Activated CD4-positive, alpha-beta memory T cell treated with anti-CD3 and anti-CD28 coated beads for 36 hours (primary cell): ENCODE measurements at regions of chr14 and their contacts with region 1.

Region 1: GRCh38 chr14:69637503-69638030 is 26.2 kb downstream of the SUSD6 start:
- DNase-seq: peak; percentile 58
- H3K4me3 Mint-ChIP-seq: peak overlapping the region; percentile 54
- H3K27ac Mint-ChIP-seq: peak overlapping the region; percentile 94
- H3K4me1 Mint-ChIP-seq: peaks cover 92% of the 10 kb centered on the region
- H3K27me3 Mint-ChIP-seq: no peaks in the 10 kb centered on the region

Region 2: DNA sequence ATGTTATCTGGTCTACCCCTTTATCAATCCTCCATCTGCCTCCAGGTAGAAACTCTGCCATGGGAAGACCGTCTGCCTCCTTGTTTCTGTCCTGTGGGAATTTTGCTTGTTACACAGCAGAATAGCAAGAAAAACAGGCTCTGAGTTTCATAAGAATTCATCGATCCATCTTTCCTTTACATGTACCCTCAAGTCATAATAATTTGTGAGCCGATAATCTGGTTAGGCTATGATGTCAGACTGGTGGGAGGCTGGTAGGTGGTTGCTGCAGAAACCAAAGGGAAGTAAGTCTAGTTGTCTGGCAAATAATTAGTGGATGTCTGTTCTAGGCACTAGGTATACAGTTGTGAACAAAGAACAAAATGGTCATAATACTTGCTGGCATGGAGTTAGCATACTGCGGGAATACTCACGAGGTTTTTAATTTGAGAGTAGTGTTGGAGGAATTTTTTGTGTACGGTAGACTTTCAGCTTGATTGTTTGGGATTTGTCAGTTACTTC is 17.4 kb before region 1 on chr14:
- CTCF ChIA-PET with region 1: interaction called, 5 read pairs
- POLR2A ChIA-PET with region 1: interaction called, 11 read pairs
- intact Hi-C with region 1: loop called (anchors 1 kb)
- DNase-seq: peak; percentile 49
- H3K4me3 Mint-ChIP-seq: peak overlapping the region; percentile 68
- H3K27ac Mint-ChIP-seq: peak overlapping the region; percentile 98
- H3K4me1 Mint-ChIP-seq: peaks cover 97% of the 10 kb centered on the region
- H3K27me3 Mint-ChIP-seq: no peaks in the 10 kb centered on the region

Region 3: GRCh38 chr14:69625299-69626131 is 12.1 kb before region 1 on chr14:
- CTCF ChIA-PET with region 1: interaction called, 5 read pairs
- POLR2A ChIA-PET with region 1: interaction called, 11 read pairs
- intact Hi-C with region 1: loop called (anchors 1 kb)
- DNase-seq: peak; percentile 92
- H3K4me3 Mint-ChIP-seq: peak overlapping the region; percentile 71
- H3K27ac Mint-ChIP-seq: peak overlapping the region; percentile 96
- H3K4me1 Mint-ChIP-seq: peaks cover 96% of the 10 kb centered on the region
- H3K27me3 Mint-ChIP-seq: no peaks in the 10 kb centered on the region

Region 4: GRCh38 chr14:69658664-69659261 is 21.2 kb after region 1 on chr14:
- CTCF ChIA-PET with region 1: no interaction called
- POLR2A ChIA-PET with region 1: interaction called, 3 read pairs
- intact Hi-C with region 1: loop called (anchors 1 kb)
- DNase-seq: peak; percentile 61
- H3K4me3 Mint-ChIP-seq: no peak overlapping the region
- H3K27ac Mint-ChIP-seq: peak overlapping the region; percentile 83
- H3K4me1 Mint-ChIP-seq: peaks cover 93% of the 10 kb centered on the region
- H3K27me3 Mint-ChIP-seq: no peaks in the 10 kb centered on the region

Region 5: GRCh38 chr14:69685716-69686115 is 48.1 kb after region 1 on chr14:
- CTCF ChIA-PET with region 1: interaction called, 4 read pairs
- POLR2A ChIA-PET with region 1: interaction called, 18 read pairs
- intact Hi-C with region 1: loop called (anchors 1 kb)
- DNase-seq: peak; percentile 80
- H3K4me3 Mint-ChIP-seq: peak overlapping the region; percentile 57
- H3K27ac Mint-ChIP-seq: peak overlapping the region; percentile 96
- H3K4me1 Mint-ChIP-seq: peaks cover 83% of the 10 kb centered on the region
- H3K27me3 Mint-ChIP-seq: no peaks in the 10 kb centered on the region